Thyroid gland (tissue), 4 donors: ENCODE measurements at regions of chr10 and their contacts with region 1.

Region 1: DNA sequence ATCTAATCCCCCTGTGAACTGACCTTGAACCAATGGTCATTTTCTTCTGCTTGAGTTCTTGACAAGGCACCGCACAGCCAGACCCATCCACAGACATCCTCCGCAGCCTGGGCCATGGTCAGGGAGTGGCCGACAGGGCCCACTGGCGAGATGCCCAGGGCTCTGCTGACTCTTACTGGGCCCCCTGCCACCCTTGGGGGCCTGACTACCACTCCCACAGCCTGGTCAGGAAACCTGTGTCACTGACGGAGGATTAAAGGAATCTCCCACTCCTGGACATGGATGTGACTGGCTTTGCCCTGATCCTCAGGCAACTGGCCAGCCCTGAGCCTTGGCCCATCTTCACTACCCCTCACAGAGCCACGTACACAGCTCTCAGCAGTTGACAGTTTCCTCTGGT is 50.4 kb upstream of the ENO4 start:
- DNase-seq: no peak
- H3K4me3 ChIP-seq: no peak overlapping the region
- H3K27ac ChIP-seq: no peak overlapping the region
- H3K4me1 ChIP-seq: no peaks in the 10 kb centered on the region
- H3K27me3 ChIP-seq: no peaks in the 10 kb centered on the region
- CTCF ChIP-seq: no peak
- POLR2A ChIP-seq: no peak

Region 2: GRCh38 chr10:116690356-116691322 is 108.2 kb before region 1 on chr10:
- intact Hi-C with region 1: no loop called
- DNase-seq: peak; percentile 63 to 68
- H3K4me3 ChIP-seq: no peak overlapping the region
- H3K27ac ChIP-seq: peak overlapping the region; percentile 43 to 92 (median 81)
- H3K4me1 ChIP-seq: peaks cover 42 to 75% of the 10 kb centered on the region in 2 donors
- H3K27me3 ChIP-seq: no peaks in the 10 kb centered on the region
- CTCF ChIP-seq: peak in 5 of 6 experiments; percentile 20 to 58 (median 40)
- POLR2A ChIP-seq: no peak

Region 3: GRCh38 chr10:116737627-116738327 is 61.1 kb before region 1 on chr10:
- intact Hi-C with region 1: no loop called
- DNase-seq: no peak
- H3K4me3 ChIP-seq: no peak overlapping the region
- H3K27ac ChIP-seq: no peak overlapping the region
- H3K4me1 ChIP-seq: peaks cover 3 to 11% of the 10 kb centered on the region in 2 donors
- H3K27me3 ChIP-seq: no peaks in the 10 kb centered on the region
- CTCF ChIP-seq: peak in 1 of 6 experiments; percentile 35
- POLR2A ChIP-seq: no peak

Region 4: DNA sequence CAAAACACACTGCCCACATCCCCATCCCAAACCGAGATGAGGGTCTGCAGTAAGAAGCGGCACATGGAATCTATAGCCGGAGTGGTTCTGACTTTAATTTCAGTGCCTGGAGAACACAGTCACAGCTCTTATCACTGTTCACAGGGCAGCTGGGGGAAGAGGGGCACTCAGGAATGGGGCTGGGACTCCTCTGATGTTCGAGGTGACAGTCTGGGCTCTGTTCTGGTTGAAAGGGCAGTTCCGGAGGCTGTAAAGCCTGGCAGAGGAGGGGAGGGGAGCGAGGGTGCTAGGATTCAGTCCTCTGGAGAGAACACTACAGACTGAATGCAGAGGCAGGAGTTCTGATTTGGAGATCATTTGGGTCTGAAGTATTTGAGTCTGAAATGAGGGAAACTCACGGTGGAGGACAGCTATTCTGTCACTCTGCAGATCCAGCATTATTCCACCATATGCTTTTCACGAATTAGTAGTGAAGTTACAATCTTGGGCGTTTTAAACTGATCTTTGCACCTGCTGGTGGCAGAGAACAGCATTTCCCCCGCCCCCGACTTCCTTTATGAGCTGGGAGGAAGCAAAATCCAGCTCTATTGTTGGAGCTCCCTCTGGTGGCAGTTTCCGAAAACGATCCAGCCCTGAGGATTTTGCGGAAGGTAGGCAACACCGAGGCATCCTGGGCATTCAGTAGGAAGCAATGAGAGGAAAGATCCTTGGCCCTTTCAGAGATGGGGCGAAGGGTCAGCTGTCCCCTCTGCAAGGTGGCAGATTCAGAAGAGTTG is 375.8 kb after region 1 on chr10:
- intact Hi-C with region 1: loop called (anchors 2 kb)
- DNase-seq: peak; percentile 76 to 82
- H3K4me3 ChIP-seq: peak overlapping the region in 2 of 3 donors; percentile 14 to 32
- H3K27ac ChIP-seq: no peak overlapping the region
- H3K4me1 ChIP-seq: peaks cover 0 to 11% of the 10 kb centered on the region in 2 donors
- H3K27me3 ChIP-seq: no peaks in the 10 kb centered on the region
- CTCF ChIP-seq: peak; percentile 46 to 83 (median 72)
- POLR2A ChIP-seq: no peak